ENCODE measurements at regions of chr12 and their contacts with region 1.

Region 1: DNA sequence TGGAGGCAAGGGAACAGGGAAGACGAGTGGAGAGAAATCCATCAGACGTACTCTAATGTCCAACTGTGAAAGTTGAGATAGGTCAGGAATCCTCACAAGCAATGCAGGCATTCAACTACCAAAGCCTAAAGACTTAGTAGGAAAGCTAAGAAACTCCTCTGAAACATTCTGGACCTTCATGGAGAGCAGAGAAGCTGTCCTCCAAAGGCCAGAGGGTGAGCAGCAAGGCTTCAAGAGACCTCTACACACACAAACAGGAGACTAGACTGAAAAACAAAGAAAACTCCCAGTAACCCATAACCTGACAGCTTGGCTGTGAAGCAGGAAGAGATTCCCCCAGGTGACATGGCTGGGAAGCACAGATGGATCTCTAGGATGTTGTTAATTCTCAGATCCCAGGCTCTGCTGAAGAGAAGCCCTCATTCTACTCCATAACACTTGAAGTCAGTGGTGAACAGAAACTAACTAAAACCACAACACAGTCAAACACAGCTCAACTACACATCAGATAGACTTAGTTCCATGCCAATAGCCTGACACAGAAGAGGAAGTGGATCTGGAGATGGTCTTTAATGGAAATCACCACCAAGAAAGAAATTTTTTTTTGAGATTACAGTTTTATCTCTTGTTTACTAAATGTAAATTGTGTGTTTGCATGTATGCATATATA is 23.2 kb upstream of the LYZ start:
- DNase-seq: no peak
- ATAC-seq: peak; percentile 73
- H3K4me3 Mint-ChIP-seq: no peak overlapping the region
- H3K27ac Mint-ChIP-seq: no peak overlapping the region
- H3K4me1 Mint-ChIP-seq: peaks cover 25% of the 10 kb centered on the region
- H3K27me3 Mint-ChIP-seq: peaks cover 10% of the 10 kb centered on the region
- CTCF ChIP-seq: no peak

Region 2: DNA sequence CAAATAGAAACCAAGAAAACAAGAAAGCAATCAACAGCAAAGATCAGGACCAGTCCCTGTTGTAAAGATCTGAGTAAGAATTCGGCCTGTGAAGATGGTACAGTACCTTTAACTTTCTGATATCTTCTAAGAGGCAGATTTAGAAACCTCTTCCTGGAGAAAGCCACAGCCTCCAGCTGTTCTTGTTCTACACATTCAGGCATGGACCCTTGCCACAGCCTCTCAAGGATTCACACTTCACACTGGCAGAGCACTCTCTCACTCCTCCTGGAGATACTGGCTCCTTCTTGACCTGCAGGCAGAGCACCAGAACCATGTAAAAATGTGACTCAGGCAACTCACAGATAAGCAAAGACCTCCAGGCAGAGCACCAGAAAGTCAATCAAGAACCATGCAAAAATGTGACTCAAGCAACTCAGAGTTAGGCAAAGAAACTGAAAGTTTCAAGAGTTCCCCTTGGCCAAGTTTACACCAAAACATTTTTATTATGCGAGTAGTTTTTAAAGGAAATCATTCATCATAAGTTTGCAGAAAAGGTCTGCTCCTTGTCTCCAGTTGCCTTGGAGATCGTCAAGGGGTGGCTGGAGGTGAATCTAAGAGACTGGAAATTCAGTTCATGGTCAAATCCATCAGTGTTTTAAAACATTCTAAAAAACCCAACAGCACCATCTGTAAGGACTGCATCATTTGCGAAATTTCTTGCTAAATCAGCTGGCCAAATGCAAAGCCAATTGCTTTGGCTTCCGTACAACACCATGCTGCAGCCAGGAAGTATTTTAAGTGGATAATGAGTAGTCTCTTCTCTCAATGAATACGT is 873.5 kb before region 1 on chr12:
- CTCF ChIA-PET with region 1: no interaction called
- POLR2A ChIA-PET with region 1: no interaction called
- intact Hi-C with region 1: no loop called
- DNase-seq: peak; percentile 22
- ATAC-seq: peak; percentile 78
- H3K4me3 Mint-ChIP-seq: peak overlapping the region; percentile 76
- H3K27ac Mint-ChIP-seq: peak overlapping the region; percentile 85
- H3K4me1 Mint-ChIP-seq: peaks cover 94% of the 10 kb centered on the region
- H3K27me3 Mint-ChIP-seq: no peaks in the 10 kb centered on the region
- CTCF ChIP-seq: no peak

Region 3: DNA sequence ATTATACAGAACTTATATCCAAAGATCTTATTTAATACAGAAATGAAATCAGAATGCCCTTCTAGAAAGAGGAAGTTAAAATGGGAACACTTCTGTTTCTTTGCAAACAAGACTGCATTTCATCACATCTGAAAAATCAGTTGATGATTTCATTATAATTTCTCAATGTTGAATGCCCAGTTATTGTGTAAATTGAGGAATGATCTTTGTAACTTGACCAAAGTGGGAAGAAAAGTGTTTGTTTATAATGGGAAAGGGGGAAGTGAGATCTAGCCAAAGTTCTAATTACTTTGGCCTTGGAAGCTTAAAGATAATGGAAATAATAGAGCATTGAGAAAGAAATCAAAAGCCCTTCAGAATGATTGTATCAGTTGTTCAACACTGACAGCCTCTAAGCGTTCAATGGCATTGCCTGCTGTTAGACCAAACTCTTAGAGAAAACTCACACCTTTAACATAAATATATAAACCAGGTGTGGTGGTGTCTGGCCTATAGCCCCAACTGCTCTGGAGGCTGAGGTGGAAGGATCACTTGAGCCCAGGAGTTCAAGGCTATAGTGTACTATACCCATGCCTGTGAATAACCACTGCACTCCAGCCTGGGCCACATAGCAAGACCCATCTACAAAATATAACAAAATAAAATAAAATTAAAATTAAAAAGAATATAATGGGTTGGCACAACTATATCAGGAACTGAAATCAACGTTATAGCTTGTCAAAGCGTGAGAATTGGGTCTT is 13.4 kb after region 1 on chr12:
- CTCF ChIA-PET with region 1: no interaction called
- POLR2A ChIA-PET with region 1: interaction called, 4 read pairs
- intact Hi-C with region 1: loop called (anchors 2 kb)
- DNase-seq: no peak
- ATAC-seq: peak; percentile 50
- H3K4me3 Mint-ChIP-seq: no peak overlapping the region
- H3K27ac Mint-ChIP-seq: peak overlapping the region; percentile 79
- H3K4me1 Mint-ChIP-seq: peaks cover 23% of the 10 kb centered on the region
- H3K27me3 Mint-ChIP-seq: peaks cover 2% of the 10 kb centered on the region
- CTCF ChIP-seq: no peak